GM10248 (cell line): ENCODE measurements at regions of chr2 and their contacts with region 1.

Region 1: DNA sequence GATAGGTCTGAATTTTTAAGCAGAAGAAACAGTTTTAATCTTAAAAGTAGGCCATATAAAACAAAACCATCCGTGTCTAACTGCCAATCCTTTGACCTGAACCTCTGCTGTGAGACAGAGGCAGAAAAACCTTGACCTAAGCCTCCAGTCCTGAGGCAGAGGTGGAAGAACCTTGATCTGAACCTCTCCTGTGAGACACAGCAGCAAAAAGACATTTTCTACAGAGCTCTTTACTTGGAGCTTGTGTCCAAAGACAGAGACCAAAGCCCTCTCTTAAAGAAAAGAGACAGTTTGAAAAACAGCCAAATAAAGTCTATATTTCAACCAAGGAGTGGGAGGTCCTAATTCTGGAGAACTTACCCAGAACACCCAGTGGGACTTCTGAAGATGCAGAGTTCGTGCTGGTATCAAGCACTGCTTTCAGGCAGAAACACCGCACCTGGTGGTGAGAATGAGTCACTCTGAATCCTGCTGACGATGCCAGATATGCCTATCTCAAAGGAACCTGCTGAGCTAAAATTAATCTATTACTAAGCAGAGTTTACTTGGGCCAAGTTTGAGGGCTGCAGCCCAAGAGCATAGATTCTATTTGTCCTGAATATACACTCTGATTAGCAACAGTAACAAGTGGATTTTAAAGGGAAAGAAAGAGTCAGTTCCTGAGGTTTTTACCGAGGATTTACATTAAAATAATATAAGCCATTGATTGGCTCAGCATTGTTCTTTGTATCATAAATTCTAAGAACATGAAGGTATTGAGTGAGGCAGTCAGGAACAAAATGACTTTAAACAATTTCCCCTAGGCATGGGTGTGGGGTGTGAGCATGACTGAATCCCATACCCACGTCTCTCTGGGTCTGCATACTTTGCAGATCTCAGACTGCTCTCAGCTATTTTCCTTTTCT is 806.4 kb downstream of the TRIB2 start:
- DNase-seq: peak; percentile 29
- CTCF ChIP-seq: no peak

Region 2: GRCh38 chr2:13504808-13505207 is 18.4 kb before region 1 on chr2:
- CTCF ChIA-PET with region 1: interaction called, 12 read pairs
- POLR2A ChIA-PET with region 1: no interaction called
- DNase-seq: no peak
- CTCF ChIP-seq: no peak